ENCODE measurements at regions of chr3 and their contacts with region 1.

Region 1: DNA sequence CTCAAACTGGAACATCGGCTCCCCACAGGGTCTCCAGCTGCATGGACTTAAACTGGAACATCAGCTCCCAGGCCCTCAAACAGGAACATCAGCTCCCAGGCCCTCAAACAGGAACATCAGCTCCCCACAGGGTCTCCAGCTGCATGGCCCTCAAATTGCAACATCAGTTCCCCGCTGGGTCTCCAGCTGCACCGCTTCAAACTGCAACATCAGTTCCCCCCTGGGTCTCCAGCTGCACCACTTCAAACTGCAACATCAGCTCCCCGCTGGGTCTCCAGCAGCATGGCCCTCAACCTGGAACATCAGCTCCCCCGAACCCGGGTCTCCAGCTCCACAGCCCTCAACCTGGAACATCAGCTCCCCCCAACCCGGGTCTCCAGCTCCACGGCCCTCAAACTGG is 82.0 kb downstream of the TFRC start:
- DNase-seq: no peak
- H3K4me3 ChIP-seq: no peak overlapping the region
- H3K27ac ChIP-seq: no peak overlapping the region
- H3K4me1 ChIP-seq: no peaks in the 10 kb centered on the region
- H3K27me3 ChIP-seq: peaks cover 0 to 21% (median 0%) of the 10 kb centered on the region in 7 donors
- CTCF ChIP-seq: no peak
- POLR2A ChIP-seq: no peak

Region 2: GRCh38 chr3:195850857-195851543 is 148.9 kb before region 1 on chr3:
- intact Hi-C with region 1: loop called (anchors 10 kb)
- DNase-seq: peak; percentile 87
- H3K4me3 ChIP-seq: peak overlapping the region in 1 of 8 donors; percentile 40
- H3K27ac ChIP-seq: no peak overlapping the region
- H3K4me1 ChIP-seq: peaks cover 0 to 11% (median 9%) of the 10 kb centered on the region in 6 donors
- H3K27me3 ChIP-seq: peaks cover 0 to 23% (median 0%) of the 10 kb centered on the region in 7 donors
- CTCF ChIP-seq: peak; percentile 100
- POLR2A ChIP-seq: no peak

Measured in spleen (tissue), 13 donors.